K562 (cell line): ENCODE measurements at regions of chrX and their contacts with region 1.

Region 1: DNA sequence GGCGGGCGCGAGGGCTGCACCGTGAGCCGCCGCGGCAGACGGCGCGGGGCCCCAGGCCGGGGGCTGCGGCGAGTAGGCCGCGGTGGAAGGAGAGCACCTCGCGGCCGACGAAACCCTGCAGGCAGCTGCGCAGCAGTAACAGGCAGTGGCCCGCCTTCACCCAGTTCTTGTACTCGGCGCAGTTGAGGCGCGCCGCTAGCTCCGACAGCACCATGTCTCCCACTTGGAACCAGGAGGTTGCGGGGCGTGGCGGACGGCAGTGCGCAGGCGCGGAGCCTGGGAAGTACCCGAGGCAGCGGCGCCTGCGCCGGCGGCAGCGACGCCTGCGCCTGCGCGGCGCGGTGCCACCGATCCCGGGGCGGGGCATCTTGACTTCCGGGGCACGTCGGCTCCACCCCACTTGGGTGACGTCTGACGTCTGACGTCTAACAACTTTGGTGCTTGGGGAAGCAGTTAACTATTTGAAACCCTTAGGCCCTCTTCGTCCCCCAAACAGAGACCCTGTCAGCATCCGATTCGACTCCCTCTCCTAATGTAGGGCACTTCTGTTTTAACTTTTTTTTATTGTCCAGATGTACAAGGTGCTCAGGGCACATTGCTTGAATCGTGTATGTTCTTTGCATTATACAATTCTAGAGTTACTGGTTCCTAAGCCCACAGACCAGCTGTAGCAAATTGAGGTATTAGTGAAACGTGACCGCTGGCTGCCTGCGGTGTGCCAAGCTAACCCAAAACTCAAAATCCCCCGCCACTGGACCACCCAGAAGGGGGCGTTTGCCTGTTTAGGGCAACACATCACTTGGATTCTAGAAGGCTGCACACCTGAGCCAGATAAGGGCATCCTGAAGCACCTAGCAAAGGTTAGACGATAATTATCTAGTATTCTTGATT is at the start of gene CXorf38:
- DNase-seq: peak; percentile 93 to 96 (median 94)
- ATAC-seq: peak; percentile 94
- H3K4me3 ChIP-seq: peak within 1 kb of the TSS; percentile 76
- H3K27ac ChIP-seq: peak within 1 kb of the TSS; percentile 70
- H3K4me1 ChIP-seq: peaks cover 8 to 10% of the 10 kb centered on the region in 2 experiments; a peak in 4 of 5 replicates
- H3K27me3 ChIP-seq: no peaks in the 10 kb centered on the region
- CTCF ChIP-seq: 0 out of 6 replicates have a peak, but pooled peaks of 2 of the 3 experiments have one; percentile 1 to 18
- EP300 ChIP-seq: no peak
- POLR2A ChIP-seq: 0 out of 2 replicates have a peak, but pooled peaks have one; percentile 59
- RAD21 ChIP-seq: no peak
- polyA plus RNA-seq, gene CXorf38: 1.2 to 1.6 TPM

Region 2: DNA sequence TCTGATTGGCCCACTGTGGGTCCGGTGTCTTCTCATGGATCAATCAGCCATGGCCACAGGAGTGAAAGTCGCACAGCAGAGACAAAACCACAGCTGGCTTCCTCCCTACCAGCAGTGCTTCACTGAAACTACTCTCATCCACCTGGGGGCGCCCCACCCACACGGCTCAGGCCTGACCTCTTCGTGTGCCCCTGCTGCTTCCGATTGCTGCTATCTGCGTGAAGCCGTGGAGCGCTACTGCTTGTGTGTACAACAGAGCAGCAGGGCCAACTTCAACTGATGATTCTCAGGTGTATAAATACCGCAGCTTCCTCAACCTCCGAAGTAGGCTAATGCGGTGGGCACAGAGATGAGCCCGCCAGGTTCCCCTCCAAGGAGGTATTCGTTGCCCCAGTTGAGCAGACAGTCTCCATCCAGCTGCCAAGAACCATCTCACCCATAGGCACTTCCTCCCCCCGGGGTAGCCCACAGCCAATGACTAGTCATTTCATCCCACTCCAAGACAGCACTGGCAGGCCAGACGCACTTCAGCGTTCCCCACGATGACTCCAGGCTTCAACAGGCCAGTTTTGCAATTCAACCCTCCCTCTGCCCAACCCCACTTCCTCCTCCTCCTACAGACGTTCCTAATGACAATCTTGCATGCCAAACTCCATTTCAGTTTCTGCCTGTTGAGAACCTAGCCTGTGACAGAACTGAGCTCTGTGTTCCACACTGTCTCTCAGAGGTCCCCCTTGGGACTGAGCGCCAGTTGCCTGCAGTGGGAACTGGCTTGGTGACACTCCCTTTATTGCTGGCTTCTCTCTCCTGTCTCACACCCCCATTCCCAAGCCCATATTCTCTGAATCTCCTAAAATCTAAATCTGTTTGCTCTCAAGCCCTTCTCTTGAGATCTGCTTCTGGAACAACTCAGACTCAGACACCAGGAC is 108.1 kb before region 1 on chrX:
- CTCF ChIA-PET with region 1: interaction called, 3 read pairs
- POLR2A ChIA-PET with region 1: interaction called, 7 read pairs
- in situ Hi-C with region 1: no loop called
- intact Hi-C with region 1: loop called (anchors 1 kb)
- DNase-seq: peak; percentile 55 to 80 (median 60)
- ATAC-seq: peak; percentile 97
- H3K4me3 ChIP-seq: no peak overlapping the region
- H3K27ac ChIP-seq: no peak overlapping the region
- H3K4me1 ChIP-seq: peaks cover 7 to 9% of the 10 kb centered on the region in 2 experiments; a peak in 3 of 5 replicates
- H3K27me3 ChIP-seq: 0 out of 5 replicates have a peak, but pooled peaks cover 0 to 6% of the 10 kb centered on the region in 2 experiments
- CTCF ChIP-seq: peak; percentile 64 to 76 (median 74)
- EP300 ChIP-seq: no peak
- POLR2A ChIP-seq: no peak
- RAD21 ChIP-seq: peak; percentile 35 to 70; a peak in 2 of 4 replicates

Region 3: GRCh38 chrX:40580537-40581335 is 66.8 kb before region 1 on chrX and contains the start of gene ATP6AP2:
- CTCF ChIA-PET with region 1: no interaction called
- POLR2A ChIA-PET with region 1: no interaction called
- in situ Hi-C with region 1: no loop called
- intact Hi-C with region 1: loop called (anchors 10 kb)
- DNase-seq: peak; percentile 94 to 96 (median 95)
- ATAC-seq: peak; percentile 99
- H3K4me3 ChIP-seq: peak within 1 kb of the TSS; percentile 88
- H3K27ac ChIP-seq: peak within 1 kb of the TSS; percentile 68; the same call in 2 of the 3 replicates
- H3K4me1 ChIP-seq: peaks cover 5 to 14% of the 10 kb centered on the region in 2 experiments; a peak in 3 of 5 replicates
- H3K27me3 ChIP-seq: no peaks in the 10 kb centered on the region
- CTCF ChIP-seq: no peak
- EP300 ChIP-seq: no peak
- POLR2A ChIP-seq: peak; percentile 78
- RAD21 ChIP-seq: no peak
- polyA plus RNA-seq, gene ATP6AP2: 26.6 to 32.8 TPM

Region 4: GRCh38 chrX:40735325-40736169 is 88.0 kb after region 1 on chrX and contains the start of gene MED14:
- CTCF ChIA-PET with region 1: no interaction called
- POLR2A ChIA-PET with region 1: no interaction called
- in situ Hi-C with region 1: no loop called
- intact Hi-C with region 1: loop called (anchors 5 kb)
- DNase-seq: peak; percentile 80 to 95 (median 82)
- ATAC-seq: peak; percentile 97
- H3K4me3 ChIP-seq: peak within 1 kb of the TSS; percentile 80
- H3K27ac ChIP-seq: peak within 1 kb of the TSS; percentile 87
- H3K4me1 ChIP-seq: peaks cover 0 to 6% of the 10 kb centered on the region in 2 experiments; a peak in 3 of 5 replicates
- H3K27me3 ChIP-seq: no peaks in the 10 kb centered on the region
- CTCF ChIP-seq: peak; percentile 53 to 63 (median 59)
- EP300 ChIP-seq: no peak
- POLR2A ChIP-seq: peak; percentile 77
- RAD21 ChIP-seq: peak in 1 of 2 experiments; percentile 36; a peak in 2 of 4 replicates
- polyA plus RNA-seq, gene MED14: 9.2 to 13.0 TPM

Region 5: GRCh38 chrX:40792433-40792832 is 144.9 kb after region 1 on chrX:
- CTCF ChIA-PET with region 1: interaction called, 6 read pairs
- POLR2A ChIA-PET with region 1: no interaction called
- in situ Hi-C with region 1: no loop called
- intact Hi-C with region 1: loop called (anchors 2 kb)
- DNase-seq: no peak
- ATAC-seq: no peak
- H3K4me3 ChIP-seq: no peak overlapping the region
- H3K27ac ChIP-seq: no peak overlapping the region
- H3K4me1 ChIP-seq: peaks cover 0 to 4% of the 10 kb centered on the region in 2 experiments; a peak in 2 of 5 replicates
- H3K27me3 ChIP-seq: no peaks in the 10 kb centered on the region
- CTCF ChIP-seq: no peak
- EP300 ChIP-seq: no peak
- POLR2A ChIP-seq: no peak
- RAD21 ChIP-seq: no peak

Region 6: GRCh38 chrX:40922307-40922706 is 274.8 kb after region 1 on chrX:
- CTCF ChIA-PET with region 1: no interaction called
- POLR2A ChIA-PET with region 1: no interaction called
- in situ Hi-C with region 1: no loop called
- intact Hi-C with region 1: loop called (anchors 5 kb)
- DNase-seq: peak; percentile 31 to 64 (median 34)
- ATAC-seq: peak; percentile 74
- H3K4me3 ChIP-seq: no peak overlapping the region
- H3K27ac ChIP-seq: no peak overlapping the region
- H3K4me1 ChIP-seq: no peaks in the 10 kb centered on the region
- H3K27me3 ChIP-seq: no peaks in the 10 kb centered on the region
- CTCF ChIP-seq: peak; percentile 35 to 55 (median 52)
- EP300 ChIP-seq: no peak
- POLR2A ChIP-seq: no peak
- RAD21 ChIP-seq: peak; percentile 12 to 59; a peak in 2 of 4 replicates

Region 7: GRCh38 chrX:41116948-41117347 is 469.4 kb after region 1 on chrX:
- CTCF ChIA-PET with region 1: no interaction called
- POLR2A ChIA-PET with region 1: no interaction called
- in situ Hi-C with region 1: no loop called
- intact Hi-C with region 1: loop called (anchors 10 kb)
- DNase-seq: peak in 2 of 4 experiments; percentile 10 to 22
- ATAC-seq: peak; percentile 59
- H3K4me3 ChIP-seq: no peak overlapping the region
- H3K27ac ChIP-seq: no peak overlapping the region
- H3K4me1 ChIP-seq: peaks cover 0 to 5% of the 10 kb centered on the region in 2 experiments; a peak in 2 of 5 replicates
- H3K27me3 ChIP-seq: no peaks in the 10 kb centered on the region
- CTCF ChIP-seq: no peak
- EP300 ChIP-seq: no peak
- POLR2A ChIP-seq: no peak
- RAD21 ChIP-seq: no peak